PC-3 (cell line): ENCODE measurements at regions of chr3 and their contacts with region 1.

Region 1: GRCh38 chr3:30518181-30518864 is 88.1 kb upstream of the TGFBR2 start:
- DNase-seq: peak; percentile 74
- ATAC-seq: peak; percentile 68
- H3K4me3 ChIP-seq: no peak overlapping the region
- H3K27ac ChIP-seq: peak overlapping the region; percentile 16; the same call in 1 of the 2 replicates
- H3K4me1 ChIP-seq: peaks cover 28% of the 10 kb centered on the region
- H3K27me3 ChIP-seq: no peaks in the 10 kb centered on the region
- CTCF ChIP-seq: no peak

Region 2: GRCh38 chr3:30231277-30232141 is 286.8 kb before region 1 on chr3:
- CTCF ChIA-PET with region 1: no interaction called
- POLR2A ChIA-PET with region 1: interaction called, 12 read pairs
- intact Hi-C with region 1: no loop called
- DNase-seq: no peak
- ATAC-seq: no peak
- H3K4me3 ChIP-seq: no peak overlapping the region
- H3K27ac ChIP-seq: no peak overlapping the region
- H3K4me1 ChIP-seq: peaks cover 32% of the 10 kb centered on the region
- H3K27me3 ChIP-seq: no peaks in the 10 kb centered on the region
- CTCF ChIP-seq: no peak

Region 3: DNA sequence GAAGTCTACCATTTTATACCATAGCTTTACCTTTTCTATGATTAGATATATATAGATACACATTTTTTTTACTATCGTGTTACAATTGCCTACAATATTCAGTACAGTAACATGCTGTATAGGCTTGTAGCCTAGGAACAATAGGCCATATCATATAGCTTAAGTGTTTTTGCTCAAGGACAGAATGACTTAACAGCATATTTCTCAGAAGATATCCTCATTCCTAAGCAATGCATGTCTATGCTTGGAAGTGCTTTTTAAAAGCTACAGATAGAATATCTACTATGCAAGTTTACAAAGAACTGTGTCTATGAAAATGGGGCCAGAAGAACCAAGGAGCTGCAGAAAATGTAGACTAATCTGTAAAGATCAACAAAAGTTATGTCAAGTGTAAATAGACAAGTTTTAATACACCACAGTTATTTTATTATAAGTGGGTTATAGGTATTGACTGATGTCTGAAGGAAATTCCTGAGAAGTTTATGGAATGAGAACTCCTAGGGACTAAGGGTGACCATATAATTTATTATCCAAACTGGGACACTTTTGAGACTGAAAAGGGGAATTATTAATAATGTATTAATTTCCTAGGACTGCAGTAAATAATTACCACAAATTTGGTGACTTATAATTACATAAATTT is 50.6 kb before region 1 on chr3:
- CTCF ChIA-PET with region 1: no interaction called
- POLR2A ChIA-PET with region 1: no interaction called
- intact Hi-C with region 1: loop called (anchors 5 kb)
- DNase-seq: peak; percentile 64
- ATAC-seq: peak; percentile 90
- H3K4me3 ChIP-seq: no peak overlapping the region
- H3K27ac ChIP-seq: peak overlapping the region; percentile 10; the same call in 1 of the 2 replicates
- H3K4me1 ChIP-seq: peaks cover 27% of the 10 kb centered on the region
- H3K27me3 ChIP-seq: no peaks in the 10 kb centered on the region
- CTCF ChIP-seq: no peak

Region 4: GRCh38 chr3:30538787-30539186 is 20.5 kb after region 1 on chr3:
- CTCF ChIA-PET with region 1: no interaction called
- POLR2A ChIA-PET with region 1: interaction called, 7 read pairs
- intact Hi-C with region 1: loop called (anchors 2 kb)
- DNase-seq: peak; percentile 96
- ATAC-seq: peak; percentile 95
- H3K4me3 ChIP-seq: no peak overlapping the region; the same call in 1 of the 2 replicates
- H3K27ac ChIP-seq: peak overlapping the region; percentile 99
- H3K4me1 ChIP-seq: peaks cover 23% of the 10 kb centered on the region
- H3K27me3 ChIP-seq: no peaks in the 10 kb centered on the region
- CTCF ChIP-seq: no peak

Region 5: GRCh38 chr3:30578479-30578878 is 60.2 kb after region 1 on chr3:
- CTCF ChIA-PET with region 1: interaction called, 12 read pairs
- POLR2A ChIA-PET with region 1: no interaction called
- intact Hi-C with region 1: loop called (anchors 1 kb)
- DNase-seq: peak; percentile 94
- ATAC-seq: peak; percentile 91
- H3K4me3 ChIP-seq: no peak overlapping the region
- H3K27ac ChIP-seq: peak overlapping the region; percentile 83
- H3K4me1 ChIP-seq: peaks cover 22% of the 10 kb centered on the region
- H3K27me3 ChIP-seq: no peaks in the 10 kb centered on the region
- CTCF ChIP-seq: no peak

Region 6: GRCh38 chr3:30658328-30659052 is 140.2 kb after region 1 on chr3:
- CTCF ChIA-PET with region 1: no interaction called
- POLR2A ChIA-PET with region 1: no interaction called
- intact Hi-C with region 1: loop called (anchors 1 kb)
- DNase-seq: peak; percentile 83
- ATAC-seq: peak; percentile 58
- H3K4me3 ChIP-seq: peak overlapping the region; percentile 23
- H3K27ac ChIP-seq: peak overlapping the region; percentile 87
- H3K4me1 ChIP-seq: peaks cover 65% of the 10 kb centered on the region
- H3K27me3 ChIP-seq: no peaks in the 10 kb centered on the region
- CTCF ChIP-seq: no peak